Right cardiac atrium (tissue), 5 donors: ENCODE measurements at regions of chr6 and their contacts with region 1.

Region 1: GRCh38 chr6:163438940-163439335 is 24.4 kb downstream of the QKI start:
- DNase-seq: peak; percentile 38 to 85 (median 69)
- ATAC-seq: peak; percentile 56 to 67
- H3K4me3 ChIP-seq: no peak overlapping the region
- H3K27ac ChIP-seq: no peak overlapping the region
- H3K4me1 ChIP-seq: peaks cover 11% of the 10 kb centered on the region
- H3K27me3 ChIP-seq: no peaks in the 10 kb centered on the region

Region 2: GRCh38 chr6:163554663-163555062 is 115.7 kb after region 1 on chr6:
- intact Hi-C with region 1: loop called in 1 of 4 experiments (anchors 10 kb)
- DNase-seq: peak; percentile 28 to 78 (median 51)
- ATAC-seq: peak; percentile 33 to 52
- H3K4me3 ChIP-seq: no peak overlapping the region
- H3K27ac ChIP-seq: no peak overlapping the region
- H3K4me1 ChIP-seq: no peaks in the 10 kb centered on the region
- H3K27me3 ChIP-seq: no peaks in the 10 kb centered on the region

Region 3: DNA sequence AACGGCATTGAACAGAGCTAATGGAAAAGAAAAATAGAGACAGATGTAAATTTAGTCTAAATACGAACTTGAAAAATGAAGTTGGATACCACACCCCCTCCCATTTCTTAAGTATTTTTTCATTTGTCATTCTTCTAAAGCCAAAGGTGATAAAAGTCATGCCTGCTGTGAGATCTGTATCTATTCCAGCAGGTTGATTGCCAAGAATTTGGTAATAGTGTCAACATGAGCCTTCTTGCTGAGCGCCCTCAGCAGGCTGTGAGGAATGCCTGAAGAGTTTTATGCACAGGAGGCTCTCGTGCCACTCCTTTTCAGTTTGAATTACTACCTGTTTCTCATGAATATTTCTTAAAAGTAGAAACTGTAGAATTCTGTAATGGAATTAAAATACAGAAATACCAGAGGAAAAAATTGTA is 140.9 kb after region 1 on chr6:
- intact Hi-C with region 1: no loop called
- DNase-seq: no peak
- ATAC-seq: no peak
- H3K4me3 ChIP-seq: no peak overlapping the region
- H3K27ac ChIP-seq: no peak overlapping the region
- H3K4me1 ChIP-seq: peaks cover 3% of the 10 kb centered on the region
- H3K27me3 ChIP-seq: no peaks in the 10 kb centered on the region